ENCODE measurements at regions of chr22 and their contacts with region 1.

Region 1: GRCh38 chr22:24146194-24146616 is 35.1 kb upstream of the SUSD2 start:
- DNase-seq: peak; percentile 61
- H3K4me3 Mint-ChIP-seq: peak overlapping the region; percentile 7
- H3K27ac Mint-ChIP-seq: peak overlapping the region; percentile 37
- H3K4me1 Mint-ChIP-seq: peaks cover 20% of the 10 kb centered on the region
- H3K27me3 Mint-ChIP-seq: no peaks in the 10 kb centered on the region
- CTCF ChIP-seq: no peak

Region 2: DNA sequence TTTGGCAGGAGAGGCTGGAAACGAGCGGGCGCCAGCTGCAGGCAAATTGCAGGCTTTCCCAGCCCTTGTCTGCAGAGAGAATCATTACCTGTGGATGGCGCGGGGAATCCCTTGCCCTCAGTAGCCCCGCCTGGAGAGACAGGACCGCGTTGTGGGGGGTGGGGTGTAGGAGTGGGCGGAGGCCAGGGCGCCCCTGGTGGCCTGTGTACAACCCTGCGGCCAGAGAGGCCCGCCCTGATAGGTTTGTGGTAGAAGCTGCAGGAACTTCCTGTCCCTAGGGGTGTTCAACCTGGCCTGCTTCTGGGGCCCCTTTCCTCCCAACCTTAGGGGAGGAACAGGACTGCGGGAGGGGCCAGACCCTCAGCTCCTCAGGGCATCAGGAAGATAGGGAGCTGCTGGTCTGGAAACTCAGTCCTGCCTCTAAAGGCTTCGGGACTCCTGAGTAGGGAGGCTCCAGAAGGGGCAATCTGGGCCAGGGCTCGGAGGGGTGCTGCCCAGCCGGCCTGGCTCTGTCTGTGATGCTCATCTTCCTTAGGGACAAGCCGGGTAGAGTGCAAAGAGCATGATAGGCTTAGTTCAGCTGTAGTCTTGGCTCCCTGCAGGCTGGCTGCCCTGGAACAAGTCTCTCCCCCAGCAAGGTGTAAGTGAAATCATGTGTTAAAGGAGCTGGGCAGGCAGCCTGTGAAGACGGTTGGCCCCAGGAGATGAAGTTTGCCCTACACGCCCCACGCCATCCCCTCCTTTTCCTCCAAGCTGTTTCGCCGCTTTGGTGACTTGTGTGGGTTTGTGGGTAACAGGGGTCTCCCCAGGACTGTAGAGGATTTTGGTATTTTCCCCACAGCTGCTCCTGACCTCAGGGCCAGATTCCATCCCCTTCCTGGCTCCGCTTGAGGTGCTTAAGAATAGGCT is 11.0 kb after region 1 on chr22:
- CTCF ChIA-PET with region 1: interaction called, 11 read pairs
- intact Hi-C with region 1: no loop called
- DNase-seq: peak; percentile 93
- H3K4me3 Mint-ChIP-seq: peak overlapping the region; percentile 84
- H3K27ac Mint-ChIP-seq: no peak overlapping the region
- H3K4me1 Mint-ChIP-seq: peaks cover 9% of the 10 kb centered on the region
- H3K27me3 Mint-ChIP-seq: no peaks in the 10 kb centered on the region
- CTCF ChIP-seq: peak; percentile 93